IMR-90 (cell line): ENCODE measurements at regions of chr3 and their contacts with region 1.

Region 1: GRCh38 chr3:118682921-118683320 is 351.7 kb downstream of the IGSF11 start:
- DNase-seq: no peak
- ATAC-seq: no peak
- H3K4me3 ChIP-seq: no peak overlapping the region
- H3K27ac ChIP-seq: no peak overlapping the region
- H3K4me1 ChIP-seq: no peaks in the 10 kb centered on the region
- H3K27me3 ChIP-seq: no peaks in the 10 kb centered on the region
- CTCF ChIP-seq: no peak
- POLR2A ChIP-seq: no peak
- RAD21 ChIP-seq: no peak

Region 2: DNA sequence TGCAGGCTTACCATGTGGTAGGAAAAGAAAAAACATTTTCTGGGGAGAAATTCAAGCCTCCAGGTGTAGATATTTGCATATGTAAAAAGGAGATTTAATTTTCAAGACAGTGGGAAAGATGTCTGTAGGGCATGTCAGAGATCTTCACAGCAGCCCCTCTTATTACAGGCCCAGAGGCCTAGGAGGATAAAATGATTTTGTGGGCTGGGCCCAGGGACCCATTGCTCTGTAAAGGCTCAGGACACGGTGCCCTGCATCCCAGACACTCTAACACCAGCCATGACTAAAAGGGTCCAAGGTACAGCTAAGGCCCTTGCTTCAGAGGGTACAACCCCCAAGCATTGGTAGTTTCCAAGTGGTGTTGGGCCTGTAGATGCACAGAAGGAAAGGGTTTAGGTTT is 328.4 kb before region 1 on chr3:
- CTCF ChIA-PET with region 1: no interaction called
- POLR2A ChIA-PET with region 1: no interaction called
- dilution Hi-C with region 1: no loop called
- in situ Hi-C with region 1: no loop called
- intact Hi-C with region 1: loop called (anchors 10 kb)
- DNase-seq: no peak
- ATAC-seq: no peak
- H3K4me3 ChIP-seq: no peak overlapping the region
- H3K27ac ChIP-seq: no peak overlapping the region
- H3K4me1 ChIP-seq: no peaks in the 10 kb centered on the region
- H3K27me3 ChIP-seq: no peaks in the 10 kb centered on the region
- CTCF ChIP-seq: no peak
- POLR2A ChIP-seq: no peak
- RAD21 ChIP-seq: no peak